Activated CD4-positive, alpha-beta memory T cell treated with anti-CD3 and anti-CD28 coated beads for 36 hours (primary cell): ENCODE measurements at regions of chr17 and their contacts with region 1.

Region 1: DNA sequence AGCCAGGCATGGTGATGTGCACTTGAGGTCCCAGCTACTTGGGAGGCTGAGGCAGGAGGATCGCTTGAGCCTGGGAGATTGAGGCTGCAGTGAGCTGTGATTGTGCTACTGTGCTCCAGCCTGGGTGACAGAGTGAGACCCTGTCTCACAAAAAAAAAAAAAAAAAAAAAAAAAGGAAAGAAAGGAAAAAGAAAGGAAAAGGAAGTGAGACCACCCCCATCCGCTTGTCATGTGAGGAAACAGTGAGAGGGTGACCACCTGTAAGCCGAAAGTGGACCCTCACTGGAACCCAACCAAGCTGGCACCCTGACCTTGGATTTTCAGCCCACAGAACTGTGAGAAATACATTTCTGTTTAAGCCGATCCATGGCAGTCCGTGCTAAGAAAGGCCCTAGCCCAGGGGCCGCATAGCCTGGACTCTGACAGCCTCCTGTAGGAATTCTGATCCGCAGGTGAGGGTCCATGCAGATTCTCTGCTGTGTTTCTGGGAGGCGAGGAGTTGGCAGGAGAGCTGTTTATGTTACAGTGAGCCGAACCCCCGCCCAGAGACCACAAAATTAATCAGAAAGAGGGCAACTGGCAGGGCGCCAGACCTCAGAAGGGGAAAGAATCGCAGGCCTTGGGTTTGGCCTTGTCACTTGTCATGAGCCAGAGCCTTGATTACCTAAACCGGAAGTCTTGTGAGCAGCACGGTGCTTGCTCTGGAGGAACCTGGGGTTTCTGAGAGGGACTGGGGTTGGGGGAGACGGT is 945 bp downstream of the SGSH start:
- DNase-seq: peak; percentile 98
- H3K4me3 Mint-ChIP-seq: peak overlapping the region; percentile 89
- H3K27ac Mint-ChIP-seq: peak overlapping the region; percentile 91
- H3K4me1 Mint-ChIP-seq: peaks cover 38% of the 10 kb centered on the region
- H3K27me3 Mint-ChIP-seq: no peaks in the 10 kb centered on the region

Region 2: DNA sequence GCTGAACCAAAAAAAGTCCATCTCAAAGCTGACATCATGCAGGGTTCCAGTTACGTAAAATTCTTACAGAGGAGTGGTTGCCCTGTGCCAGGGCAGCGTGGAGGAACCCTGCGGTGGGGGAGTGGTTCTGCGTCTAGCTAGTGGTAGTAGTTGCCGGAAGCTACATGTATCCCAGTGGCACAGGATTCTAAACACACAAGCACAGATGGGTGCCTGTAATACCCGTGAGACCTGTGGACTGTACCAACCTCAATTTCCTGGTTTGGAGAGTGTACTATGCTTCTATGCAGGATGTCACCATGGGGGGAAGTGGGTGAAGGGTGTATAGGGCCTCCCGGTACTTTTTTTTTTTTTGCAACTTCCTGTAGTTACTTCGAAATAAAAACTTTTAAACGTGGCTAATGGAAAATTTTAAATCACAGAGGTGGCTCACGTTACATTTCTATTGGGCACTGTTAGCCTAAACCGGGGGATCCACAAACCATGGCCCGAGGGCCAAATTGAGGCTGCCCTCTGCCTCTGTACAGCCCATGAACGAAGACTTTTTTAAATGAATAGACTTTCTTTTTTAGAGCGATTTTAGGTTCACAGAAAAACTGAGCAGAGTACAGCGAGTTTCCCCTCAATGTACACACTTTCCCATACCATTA is 222.1 kb before region 1 on chr17:
- CTCF ChIA-PET with region 1: no interaction called
- POLR2A ChIA-PET with region 1: no interaction called
- intact Hi-C with region 1: loop called (anchors 1 kb)
- DNase-seq: peak; percentile 88
- H3K4me3 Mint-ChIP-seq: peak overlapping the region; percentile 48
- H3K27ac Mint-ChIP-seq: peak overlapping the region; percentile 90
- H3K4me1 Mint-ChIP-seq: peaks cover 42% of the 10 kb centered on the region
- H3K27me3 Mint-ChIP-seq: no peaks in the 10 kb centered on the region

Region 3: DNA sequence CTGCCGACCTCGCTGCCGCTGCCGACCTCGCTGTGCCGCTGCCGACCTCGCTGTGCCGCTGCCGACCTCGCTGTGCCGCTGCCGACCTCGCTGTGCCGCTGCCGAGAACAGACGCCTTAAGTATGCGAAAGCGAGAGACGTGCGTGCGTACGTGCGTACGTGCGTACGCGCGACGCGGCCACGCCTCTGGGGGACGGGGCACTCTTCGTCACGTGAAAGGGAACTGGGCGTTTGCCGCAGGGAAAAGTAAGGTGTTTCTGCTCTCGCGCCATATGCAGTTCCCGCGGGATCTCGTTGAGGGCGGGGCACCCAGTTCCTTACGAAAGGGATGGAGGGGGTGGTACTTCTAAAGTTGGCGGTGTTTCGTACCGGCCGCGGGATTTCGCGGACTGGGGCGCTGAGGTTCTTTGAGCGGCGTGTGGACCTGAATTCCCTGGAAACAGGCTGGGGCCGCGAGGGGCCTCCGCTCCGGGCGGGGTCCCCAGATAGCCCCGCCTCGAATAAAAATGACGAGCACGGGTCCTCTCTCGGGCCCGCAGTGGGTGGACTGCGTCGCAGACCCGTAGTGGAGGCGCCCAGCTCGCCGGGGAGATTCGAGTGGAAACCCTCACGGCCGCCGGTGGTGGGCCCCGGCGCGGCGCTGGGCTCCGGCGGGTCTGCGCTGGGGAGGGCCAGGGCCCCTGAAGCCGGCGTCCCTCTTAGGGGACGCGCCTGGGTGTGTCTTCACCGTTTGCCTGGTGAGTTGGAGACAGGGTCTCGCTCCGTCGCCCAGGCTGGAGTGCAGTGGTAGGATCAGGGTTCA is 72.0 kb before region 1 on chr17 and contains the start of gene EIF4A3:
- CTCF ChIA-PET with region 1: no interaction called
- POLR2A ChIA-PET with region 1: interaction called, 3 read pairs
- intact Hi-C with region 1: loop called (anchors 1 kb)
- DNase-seq: peak; percentile 99
- H3K4me3 Mint-ChIP-seq: peak within 1 kb of the TSS; percentile 94
- H3K27ac Mint-ChIP-seq: peak within 1 kb of the TSS; percentile 93
- H3K4me1 Mint-ChIP-seq: peaks cover 36% of the 10 kb centered on the region
- H3K27me3 Mint-ChIP-seq: no peaks in the 10 kb centered on the region
- total RNA-seq, gene EIF4A3: 111 to 115 TPM

Region 4: GRCh38 chr17:80254396-80255251 is 35.4 kb after region 1 on chr17:
- CTCF ChIA-PET with region 1: interaction called, 5 read pairs
- POLR2A ChIA-PET with region 1: interaction called, 11 read pairs
- intact Hi-C with region 1: loop called (anchors 1 kb)
- DNase-seq: peak; percentile 86
- H3K4me3 Mint-ChIP-seq: peak overlapping the region; percentile 41
- H3K27ac Mint-ChIP-seq: peak overlapping the region; percentile 92
- H3K4me1 Mint-ChIP-seq: peaks cover 71% of the 10 kb centered on the region
- H3K27me3 Mint-ChIP-seq: no peaks in the 10 kb centered on the region

Region 5: GRCh38 chr17:80263253-80264204 is 44.3 kb after region 1 on chr17:
- CTCF ChIA-PET with region 1: interaction called, 5 read pairs
- POLR2A ChIA-PET with region 1: interaction called, 11 read pairs
- intact Hi-C with region 1: loop called (anchors 1 kb)
- DNase-seq: peak; percentile 94
- H3K4me3 Mint-ChIP-seq: peak overlapping the region; percentile 82
- H3K27ac Mint-ChIP-seq: peak overlapping the region; percentile 100
- H3K4me1 Mint-ChIP-seq: peaks cover 50% of the 10 kb centered on the region
- H3K27me3 Mint-ChIP-seq: no peaks in the 10 kb centered on the region